Upper lobe of right lung (tissue), 1 donor: ENCODE measurements at regions of chr3 and their contacts with region 1.

Region 1: GRCh38 chr3:112642912-112643506 is 2.1 kb upstream of the CCDC80 start:
- DNase-seq: peak; percentile 78
- ATAC-seq: peak; percentile 95
- H3K4me3 ChIP-seq: no peak overlapping the region
- H3K27ac ChIP-seq: no peak overlapping the region
- H3K4me1 ChIP-seq: peaks cover 24% of the 10 kb centered on the region
- H3K27me3 ChIP-seq: no peaks in the 10 kb centered on the region
- CTCF ChIP-seq: peak; percentile 82

Region 2: DNA sequence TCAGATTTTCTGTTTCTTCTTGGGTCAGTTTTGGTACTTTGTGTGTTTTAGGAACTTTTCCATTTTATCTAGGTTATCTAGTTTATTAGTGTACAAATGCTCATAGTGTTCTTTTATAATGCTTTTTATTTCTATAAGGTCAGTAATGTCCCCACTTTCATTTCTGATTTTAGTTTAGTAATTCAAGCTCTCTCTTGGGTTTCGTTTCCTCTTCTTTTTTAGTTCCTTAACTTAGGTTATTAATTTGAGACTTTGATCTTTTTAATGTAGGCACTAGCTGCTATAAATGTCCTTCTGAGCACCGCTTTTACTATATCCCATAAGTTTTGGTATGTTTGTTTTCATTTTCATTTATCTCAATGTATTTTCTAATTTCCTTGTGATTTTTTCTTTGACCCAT is 230.6 kb after region 1 on chr3:
- intact Hi-C with region 1: no loop called
- DNase-seq: no peak
- ATAC-seq: no peak
- H3K4me3 ChIP-seq: no peak overlapping the region
- H3K27ac ChIP-seq: no peak overlapping the region
- H3K4me1 ChIP-seq: no peaks in the 10 kb centered on the region
- H3K27me3 ChIP-seq: no peaks in the 10 kb centered on the region
- CTCF ChIP-seq: no peak

Region 3: DNA sequence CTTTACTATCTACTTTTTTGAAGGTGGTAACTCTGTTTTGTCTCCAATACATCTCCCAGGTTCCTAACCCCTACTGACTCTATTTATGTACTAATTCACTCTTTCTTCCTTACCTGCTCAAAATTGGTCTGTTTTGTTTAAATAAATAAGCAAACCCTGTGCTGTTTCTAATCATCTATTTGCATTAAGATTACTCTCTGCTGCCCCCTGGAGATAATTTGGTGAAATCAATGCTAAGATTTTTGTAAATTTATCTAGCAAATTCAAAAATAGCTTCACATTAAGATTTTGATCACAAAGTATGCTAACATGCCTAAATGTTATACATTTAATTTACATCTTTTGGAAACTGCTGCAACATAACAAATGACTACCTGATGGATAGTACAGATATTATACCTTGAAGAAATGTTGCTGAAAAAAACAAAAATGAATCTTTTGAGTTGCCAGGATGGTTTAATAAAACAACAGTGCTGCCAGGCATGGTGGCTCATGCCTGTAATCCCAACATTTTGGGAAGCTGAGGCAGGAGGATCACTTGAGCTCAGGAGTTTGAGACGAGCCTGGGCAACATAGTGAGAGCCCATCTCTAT is 336.3 kb after region 1 on chr3:
- intact Hi-C with region 1: loop called (anchors 10 kb)
- DNase-seq: no peak
- ATAC-seq: no peak
- H3K4me3 ChIP-seq: no peak overlapping the region
- H3K27ac ChIP-seq: no peak overlapping the region
- H3K4me1 ChIP-seq: peaks cover 7% of the 10 kb centered on the region
- H3K27me3 ChIP-seq: no peaks in the 10 kb centered on the region
- CTCF ChIP-seq: peak; percentile 81